ENCODE measurements at regions of chr18 and their contacts with region 1.

Region 1: GRCh38 chr18:44679056-44679905 is 1.4 kb upstream of the SETBP1 start:
- DNase-seq: peak in 33 of 35 experiments; percentile 11 to 80 (median 51)
- ATAC-seq: peak; percentile 85 to 94 (median 88)
- H3K4me3 ChIP-seq: peak overlapping the region; percentile 64 to 90
- H3K4me3 Mint-ChIP-seq: peak overlapping the region in 2 of 3 donors; percentile 66 to 80
- H3K27ac ChIP-seq: peak overlapping the region; percentile 38
- H3K27ac Mint-ChIP-seq: no peak overlapping the region
- H3K4me1 ChIP-seq: peaks cover 10 to 17% of the 10 kb centered on the region in 2 experiments
- H3K4me1 Mint-ChIP-seq: peaks cover 0 to 4% (median 4%) of the 10 kb centered on the region in 3 donors
- H3K27me3 ChIP-seq: peaks cover 3 to 11% of the 10 kb centered on the region in 2 experiments
- H3K27me3 Mint-ChIP-seq: peaks cover 16 to 25% of the 10 kb centered on the region in 2 donors

Region 2: GRCh38 chr18:44700652-44701051 is 21.4 kb after region 1 on chr18:
- CTCF ChIA-PET with region 1: interaction called in 1 of 2 experiments, 4 read pairs
- POLR2A ChIA-PET with region 1: interaction called in 1 of 2 experiments, 14 read pairs
- DNase-seq: peak in 19 of 35 experiments; percentile 3 to 62 (median 28)
- ATAC-seq: peak in 3 of 4 experiments; percentile 13 to 61 (median 55)
- H3K4me3 ChIP-seq: no peak overlapping the region
- H3K4me3 Mint-ChIP-seq: no peak overlapping the region
- H3K27ac ChIP-seq: peak overlapping the region; percentile 60
- H3K27ac Mint-ChIP-seq: no peak overlapping the region
- H3K4me1 ChIP-seq: peaks cover 0 to 13% of the 10 kb centered on the region in 2 experiments
- H3K4me1 Mint-ChIP-seq: peaks cover 4 to 6% (median 5%) of the 10 kb centered on the region in 3 donors
- H3K27me3 ChIP-seq: no peaks in the 10 kb centered on the region
- H3K27me3 Mint-ChIP-seq: peaks cover 0 to 3% of the 10 kb centered on the region in 2 donors

Measured in T-cell (primary cell).